Kidney (tissue), 22 donors: ENCODE measurements at regions of chr17 and their contacts with region 1.

Region 1: GRCh38 chr17:67689534-67690177 is 28.1 kb upstream of the NOL11 start:
- DNase-seq: peak in 4 of 5 donors; percentile 47 to 89 (median 73)
- H3K4me3 ChIP-seq: no peak overlapping the region
- H3K27ac ChIP-seq: no peak overlapping the region
- H3K4me1 ChIP-seq: no peaks in the 10 kb centered on the region
- H3K27me3 ChIP-seq: no peaks in the 10 kb centered on the region
- CTCF ChIP-seq: peak; percentile 71

Region 2: GRCh38 chr17:67376737-67377487 is 312.7 kb before region 1 on chr17 and contains the start of gene PITPNC1:
- intact Hi-C with region 1: loop called (anchors 5 kb)
- DNase-seq: peak; percentile 90 to 95 (median 93)
- H3K4me3 ChIP-seq: peak within 1 kb of the TSS; percentile 55 to 71 (median 66)
- H3K27ac ChIP-seq: peak within 1 kb of the TSS; percentile 69 to 95
- H3K4me1 ChIP-seq: peaks cover 3 to 12% (median 9%) of the 10 kb centered on the region in 3 donors
- H3K27me3 ChIP-seq: no peaks in the 10 kb centered on the region
- CTCF ChIP-seq: peak; percentile 25
- total RNA-seq, gene PITPNC1: 41.3 TPM